Activated CD4-positive, alpha-beta memory T cell treated with anti-CD3 and anti-CD28 coated beads for 36 hours (primary cell): ENCODE measurements at regions of chr14 and their contacts with region 1.

Region 1: GRCh38 chr14:76956316-76957090 is 72.0 kb downstream of the IRF2BPL start:
- DNase-seq: peak; percentile 97
- H3K4me3 Mint-ChIP-seq: peak overlapping the region; percentile 79
- H3K27ac Mint-ChIP-seq: peak overlapping the region; percentile 99
- H3K4me1 Mint-ChIP-seq: peaks cover 77% of the 10 kb centered on the region
- H3K27me3 Mint-ChIP-seq: no peaks in the 10 kb centered on the region

Region 2: DNA sequence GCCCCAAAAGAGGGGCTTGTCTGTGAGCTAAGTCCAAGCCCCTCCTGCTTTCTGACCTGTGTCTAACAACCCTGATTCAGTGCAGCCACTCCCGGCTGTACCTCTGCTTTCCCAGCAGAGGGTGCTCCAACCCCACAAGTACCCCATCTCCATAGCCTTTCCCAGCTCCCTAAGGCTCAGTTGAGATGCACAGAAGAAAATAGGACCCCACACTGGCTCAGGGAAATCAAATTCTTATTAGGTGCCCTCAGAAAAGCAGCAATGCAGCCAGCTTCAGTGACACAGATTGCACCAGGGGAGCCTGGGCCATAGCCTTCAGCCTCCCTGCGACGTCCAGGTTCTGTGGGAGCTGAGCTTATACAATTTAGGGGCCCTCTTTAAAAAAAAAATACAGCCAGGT is 80.4 kb before region 1 on chr14:
- CTCF ChIA-PET with region 1: interaction called, 10 read pairs
- POLR2A ChIA-PET with region 1: no interaction called
- intact Hi-C with region 1: no loop called
- DNase-seq: peak; percentile 61
- H3K4me3 Mint-ChIP-seq: no peak overlapping the region
- H3K27ac Mint-ChIP-seq: no peak overlapping the region
- H3K4me1 Mint-ChIP-seq: peaks cover 2% of the 10 kb centered on the region
- H3K27me3 Mint-ChIP-seq: no peaks in the 10 kb centered on the region

Region 3: GRCh38 chr14:76910371-76910890 is 46.1 kb before region 1 on chr14:
- CTCF ChIA-PET with region 1: interaction called, 26 read pairs
- POLR2A ChIA-PET with region 1: interaction called, 4 read pairs
- intact Hi-C with region 1: loop called (anchors 2 kb)
- DNase-seq: no peak
- H3K4me3 Mint-ChIP-seq: no peak overlapping the region
- H3K27ac Mint-ChIP-seq: no peak overlapping the region
- H3K4me1 Mint-ChIP-seq: peaks cover 19% of the 10 kb centered on the region
- H3K27me3 Mint-ChIP-seq: no peaks in the 10 kb centered on the region

Region 4: GRCh38 chr14:76941946-76942805 is 14.3 kb before region 1 on chr14:
- CTCF ChIA-PET with region 1: interaction called, 15 read pairs
- POLR2A ChIA-PET with region 1: interaction called, 4 read pairs
- intact Hi-C with region 1: loop called (anchors 1 kb)
- DNase-seq: peak; percentile 50
- H3K4me3 Mint-ChIP-seq: no peak overlapping the region
- H3K27ac Mint-ChIP-seq: peak overlapping the region; percentile 67
- H3K4me1 Mint-ChIP-seq: peaks cover 24% of the 10 kb centered on the region
- H3K27me3 Mint-ChIP-seq: no peaks in the 10 kb centered on the region

Region 5: GRCh38 chr14:77028384-77029231 is 72.1 kb after region 1 on chr14 and contains the start of gene IRF2BPL:
- CTCF ChIA-PET with region 1: interaction called, 18 read pairs
- POLR2A ChIA-PET with region 1: interaction called, 24 read pairs
- intact Hi-C with region 1: loop called (anchors 1 kb)
- DNase-seq: peak; percentile 97
- H3K4me3 Mint-ChIP-seq: peak within 1 kb of the TSS; percentile 82
- H3K27ac Mint-ChIP-seq: peak within 1 kb of the TSS; percentile 97
- H3K4me1 Mint-ChIP-seq: peaks cover 50% of the 10 kb centered on the region
- H3K27me3 Mint-ChIP-seq: no peaks in the 10 kb centered on the region
- total RNA-seq, gene IRF2BPL: 38.5 to 41.1 TPM

Region 6: DNA sequence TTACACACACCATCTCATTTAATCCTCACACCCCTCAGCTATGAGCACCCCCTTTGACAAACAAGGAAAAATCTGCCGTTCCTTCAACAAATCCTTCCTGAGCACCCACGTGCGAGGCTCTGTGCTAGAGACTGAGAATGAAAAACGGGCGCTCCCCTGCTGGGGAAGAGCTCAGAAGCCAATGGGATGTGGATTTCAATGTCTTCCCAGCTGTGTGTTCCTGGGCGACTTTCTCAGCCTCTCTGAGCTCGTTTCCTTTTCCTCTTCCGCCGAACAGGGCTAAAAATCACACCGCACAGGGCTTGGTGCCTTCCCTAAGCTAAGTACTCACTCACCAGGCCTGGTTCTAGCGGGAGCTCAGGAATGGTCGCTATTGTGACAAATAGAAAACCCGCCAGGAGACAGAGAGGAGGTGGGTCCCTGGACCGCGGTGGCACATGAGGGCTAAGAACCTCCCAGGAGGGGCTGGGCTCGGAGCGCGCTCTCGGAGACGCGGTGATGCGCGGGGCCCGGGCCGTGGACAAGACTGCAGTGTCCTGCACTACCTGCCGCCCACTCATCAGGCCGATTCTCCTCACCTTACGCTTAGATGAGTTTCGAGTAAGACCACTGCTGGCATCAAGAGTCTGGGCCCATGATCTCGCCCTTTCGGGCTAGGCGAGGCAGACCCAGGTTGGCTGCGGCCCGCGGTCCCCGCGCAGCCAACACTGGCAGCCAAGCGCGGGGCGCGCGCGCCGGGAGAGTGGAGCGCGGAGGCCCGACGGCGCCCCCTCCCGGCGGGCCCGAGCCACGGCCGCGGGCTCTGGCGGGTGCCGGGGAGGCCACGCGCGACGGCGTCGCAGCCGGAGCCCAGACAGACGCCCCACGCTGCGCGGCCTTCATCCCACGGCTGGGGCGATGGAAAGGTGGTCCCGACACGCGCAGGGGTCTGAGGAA is 168.1 kb after region 1 on chr14:
- CTCF ChIA-PET with region 1: no interaction called
- POLR2A ChIA-PET with region 1: no interaction called
- intact Hi-C with region 1: loop called (anchors 5 kb)
- DNase-seq: peak; percentile 77
- H3K4me3 Mint-ChIP-seq: peak overlapping the region; percentile 82
- H3K27ac Mint-ChIP-seq: peak overlapping the region; percentile 73
- H3K4me1 Mint-ChIP-seq: peaks cover 50% of the 10 kb centered on the region
- H3K27me3 Mint-ChIP-seq: peaks cover 2% of the 10 kb centered on the region

Region 7: DNA sequence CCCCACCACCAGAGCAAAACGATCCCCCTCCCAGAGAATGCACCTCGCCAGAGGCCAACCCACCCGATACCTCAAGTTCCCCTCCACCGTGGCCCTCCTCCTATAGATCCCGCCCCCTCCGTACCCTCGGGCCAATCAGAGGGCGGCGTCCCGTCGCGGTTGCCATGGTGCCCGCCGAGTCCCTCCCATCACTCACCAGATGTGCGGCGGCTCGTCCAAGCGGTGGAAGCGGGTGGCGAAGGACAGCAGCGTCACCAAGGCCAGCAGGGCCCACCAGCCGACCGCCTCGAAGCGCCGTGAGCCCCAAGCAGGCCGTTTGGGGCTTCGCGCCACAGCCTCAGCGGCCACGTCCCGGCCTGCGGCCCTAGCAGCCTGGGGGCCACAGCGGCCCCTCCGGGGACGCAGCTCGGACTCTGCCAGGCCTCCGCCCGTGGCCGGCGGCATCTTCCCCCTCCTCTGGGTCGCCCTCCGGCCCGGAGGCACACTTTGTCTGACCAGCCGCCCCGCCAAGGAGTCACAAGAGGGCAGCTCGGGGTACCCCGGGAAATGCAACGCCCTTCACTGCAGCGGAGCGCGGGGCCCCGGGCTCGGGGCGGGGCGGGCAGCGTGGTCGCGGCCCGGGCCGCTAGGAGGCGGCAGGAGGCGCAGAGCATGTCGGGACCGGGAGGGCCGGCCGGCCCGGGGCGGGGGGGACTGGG is 363.9 kb after region 1 on chr14 and contains the start of gene POMT2:
- CTCF ChIA-PET with region 1: no interaction called
- POLR2A ChIA-PET with region 1: no interaction called
- intact Hi-C with region 1: loop called (anchors 5 kb)
- DNase-seq: peak; percentile 95
- H3K4me3 Mint-ChIP-seq: peak within 1 kb of the TSS; percentile 93
- H3K27ac Mint-ChIP-seq: peak within 1 kb of the TSS; percentile 99
- H3K4me1 Mint-ChIP-seq: peaks cover 17% of the 10 kb centered on the region
- H3K27me3 Mint-ChIP-seq: no peaks in the 10 kb centered on the region
- total RNA-seq, gene POMT2: 12.9 to 13.1 TPM